Mammary epithelial cell (primary cell): ENCODE measurements at regions of chr11 and their contacts with region 1.

Region 1: GRCh38 chr11:46529095-46529905 is 64.5 kb downstream of the AMBRA1 start:
- DNase-seq: peak; percentile 21
- H3K4me3 ChIP-seq: no peak overlapping the region
- H3K27ac ChIP-seq: no peak overlapping the region
- H3K4me1 ChIP-seq: no peaks in the 10 kb centered on the region
- H3K27me3 ChIP-seq: no peaks in the 10 kb centered on the region
- CTCF ChIP-seq: peak; percentile 92 to 95

Region 2: DNA sequence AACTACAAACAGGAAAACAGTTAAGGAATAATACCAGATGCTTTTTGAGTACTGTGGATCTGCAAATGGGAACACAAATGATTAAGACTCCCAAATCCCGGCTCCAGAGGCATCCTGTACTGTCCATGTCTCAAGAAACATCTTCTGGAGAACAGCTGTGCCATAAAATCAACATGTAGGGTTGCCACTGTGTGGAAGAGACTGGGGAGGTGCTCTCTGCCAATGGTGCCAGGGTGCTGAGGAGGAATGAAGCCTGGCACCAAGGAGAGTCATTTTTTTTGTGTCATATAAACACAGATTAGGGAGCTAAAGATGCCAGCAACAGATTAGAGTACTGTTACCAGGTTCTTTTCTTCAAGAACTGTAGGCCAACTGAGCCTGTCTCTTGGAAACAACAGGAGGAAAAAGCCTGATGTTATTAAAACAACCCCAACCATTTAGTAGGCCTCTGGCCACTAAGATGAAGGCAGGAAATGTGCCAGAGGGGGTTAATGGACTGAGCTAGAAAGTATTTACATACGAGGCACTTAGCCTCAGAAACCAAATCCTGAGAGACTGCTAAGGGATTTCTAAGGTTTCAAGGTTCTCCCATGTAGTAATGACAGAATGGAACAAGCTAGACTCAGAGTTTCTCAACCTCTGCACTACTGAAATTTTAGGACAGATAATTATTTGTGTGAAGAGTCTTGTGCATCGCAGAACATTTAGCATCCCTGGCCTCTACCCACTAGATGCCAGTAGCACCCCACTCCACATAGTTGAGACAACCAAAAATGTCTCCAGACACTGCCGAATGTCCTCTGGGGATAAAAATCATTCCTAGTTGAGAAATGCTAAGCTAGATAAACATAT is 83.2 kb before region 1 on chr11:
- CTCF ChIA-PET with region 1: no interaction called
- dilution Hi-C with region 1: no loop called
- in situ Hi-C with region 1: no loop called
- intact Hi-C with region 1: loop called (anchors 1 kb)
- DNase-seq: no peak
- H3K4me3 ChIP-seq: no peak overlapping the region
- H3K27ac ChIP-seq: no peak overlapping the region
- H3K4me1 ChIP-seq: no peaks in the 10 kb centered on the region
- H3K27me3 ChIP-seq: no peaks in the 10 kb centered on the region
- CTCF ChIP-seq: peak in 1 of 2 donors; percentile 33

Region 3: DNA sequence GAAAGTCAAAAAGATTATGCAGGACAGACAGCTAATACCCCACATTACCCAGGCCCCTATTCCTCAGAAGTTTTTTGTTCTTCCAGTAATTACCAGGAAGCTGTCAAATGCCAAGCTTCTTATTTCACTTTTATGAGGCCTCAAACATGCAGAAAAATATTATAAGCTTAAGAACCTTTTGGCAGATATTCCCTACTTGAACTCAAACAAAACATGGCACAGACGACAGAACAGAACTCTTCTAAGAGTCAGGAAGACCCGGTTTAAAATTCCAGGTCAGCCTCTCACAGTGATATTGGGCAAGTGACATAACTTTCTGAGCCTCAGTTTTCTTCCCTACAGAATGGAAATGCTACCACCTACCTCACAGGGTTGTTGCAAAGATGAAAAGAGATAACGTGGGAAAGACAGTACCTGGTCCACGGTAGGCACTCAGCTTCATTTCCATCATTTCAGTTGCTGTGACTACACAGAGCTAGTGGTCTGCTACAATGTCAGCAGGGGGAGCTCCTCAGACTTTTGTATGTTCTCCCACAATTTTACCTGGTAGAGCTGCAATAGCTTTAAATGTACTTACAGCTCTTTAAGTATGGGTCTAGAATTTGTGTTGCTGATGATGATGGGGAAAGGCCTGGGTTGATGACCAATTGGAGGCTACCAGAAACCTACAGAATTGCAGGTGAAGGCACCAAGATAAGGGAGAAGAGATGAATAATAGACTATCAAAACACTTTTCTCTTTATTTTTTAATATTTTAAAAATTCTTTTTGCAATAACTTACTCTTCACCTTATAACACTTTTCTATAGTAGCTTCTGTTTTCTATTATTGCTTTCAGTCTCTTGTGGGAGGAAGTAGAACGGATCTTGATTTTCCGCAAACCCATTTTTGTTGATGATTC is 39.4 kb before region 1 on chr11:
- CTCF ChIA-PET with region 1: interaction called, 11 read pairs
- dilution Hi-C with region 1: no loop called
- in situ Hi-C with region 1: no loop called
- intact Hi-C with region 1: loop called (anchors 1 kb)
- DNase-seq: peak; percentile 32
- H3K4me3 ChIP-seq: no peak overlapping the region
- H3K27ac ChIP-seq: no peak overlapping the region
- H3K4me1 ChIP-seq: no peaks in the 10 kb centered on the region
- H3K27me3 ChIP-seq: no peaks in the 10 kb centered on the region
- CTCF ChIP-seq: peak; percentile 61 to 62